ENCODE measurements at regions of chr16 and their contacts with region 1.

Region 1: GRCh38 chr16:53651357-53651756 is 52.3 kb downstream of the RPGRIP1L start:
- DNase-seq: no peak
- ATAC-seq: no peak
- H3K4me3 ChIP-seq: no peak overlapping the region
- H3K27ac ChIP-seq: no peak overlapping the region
- H3K4me1 ChIP-seq: no peaks in the 10 kb centered on the region
- H3K27me3 ChIP-seq: no peaks in the 10 kb centered on the region
- CTCF ChIP-seq: no peak

Region 2: DNA sequence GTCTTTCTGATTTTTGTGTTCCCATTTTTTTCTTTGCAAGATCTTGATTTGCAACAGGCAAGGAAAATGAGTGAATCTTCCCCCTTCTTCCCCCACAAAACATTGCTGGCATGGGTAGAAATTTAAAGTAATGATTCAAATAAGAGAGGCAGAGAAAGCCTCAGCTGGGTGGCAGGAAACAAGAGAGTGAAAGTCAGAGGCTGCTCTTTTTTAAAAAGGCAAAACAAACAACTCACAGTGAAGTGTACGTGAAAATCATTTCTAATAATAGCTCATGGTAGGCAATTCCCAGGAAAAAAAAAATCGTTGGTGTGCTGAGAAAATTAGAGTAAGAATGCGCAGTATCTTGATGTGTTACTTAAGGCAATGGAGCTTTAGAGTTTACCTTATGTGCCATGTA is 282.1 kb after region 1 on chr16:
- CTCF ChIA-PET with region 1: interaction called, 11 read pairs
- POLR2A ChIA-PET with region 1: no interaction called
- in situ Hi-C with region 1: no loop called
- intact Hi-C with region 1: no loop called
- DNase-seq: no peak
- ATAC-seq: no peak
- H3K4me3 ChIP-seq: no peak overlapping the region
- H3K27ac ChIP-seq: no peak overlapping the region
- H3K4me1 ChIP-seq: no peaks in the 10 kb centered on the region
- H3K27me3 ChIP-seq: no peaks in the 10 kb centered on the region
- CTCF ChIP-seq: no peak

Measured in Panc1 (cell line).